Activated CD4-positive, alpha-beta T cell treated with anti-CD3 and anti-CD28 coated beads for 36 hours (primary cell): ENCODE measurements at regions of chr1 and their contacts with region 1.

Region 1: DNA sequence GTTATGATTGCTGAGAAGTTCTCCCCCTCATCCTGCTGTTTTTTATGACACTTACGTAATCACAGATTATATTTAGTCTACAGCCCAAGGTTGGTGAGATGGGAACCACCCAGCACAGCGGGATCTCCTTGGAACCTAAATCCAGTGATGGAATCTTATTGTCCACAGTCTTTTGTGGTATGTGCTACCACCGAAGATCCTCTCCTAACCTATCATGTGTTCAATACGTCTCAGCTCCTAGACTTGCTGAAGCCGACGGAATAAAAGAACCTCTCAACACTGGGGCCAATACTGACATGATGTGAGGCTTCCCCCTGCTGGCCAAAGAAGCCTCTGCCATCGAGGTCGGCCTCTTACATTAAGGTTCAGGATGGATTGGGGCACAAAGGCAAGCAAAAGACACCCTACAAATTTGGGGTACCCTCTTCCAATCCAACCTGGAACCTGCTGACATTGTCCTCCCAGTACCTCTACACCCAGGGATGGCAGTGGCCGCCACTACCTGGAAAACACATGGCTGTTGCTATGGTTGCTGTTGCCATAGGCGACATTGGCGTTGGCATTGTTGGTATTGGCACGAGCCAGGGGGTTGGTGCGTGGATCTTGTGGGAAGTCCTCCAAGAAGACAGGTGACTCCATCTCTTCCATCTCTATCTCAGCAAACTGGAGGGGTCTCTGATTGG is 19.4 kb upstream of the KIF21B start:
- DNase-seq: peak; percentile 85
- ATAC-seq: peak; percentile 96
- H3K4me3 Mint-ChIP-seq: no peak overlapping the region
- H3K27ac Mint-ChIP-seq: no peak overlapping the region
- H3K4me1 Mint-ChIP-seq: no peaks in the 10 kb centered on the region
- H3K27me3 Mint-ChIP-seq: no peaks in the 10 kb centered on the region

Region 2: DNA sequence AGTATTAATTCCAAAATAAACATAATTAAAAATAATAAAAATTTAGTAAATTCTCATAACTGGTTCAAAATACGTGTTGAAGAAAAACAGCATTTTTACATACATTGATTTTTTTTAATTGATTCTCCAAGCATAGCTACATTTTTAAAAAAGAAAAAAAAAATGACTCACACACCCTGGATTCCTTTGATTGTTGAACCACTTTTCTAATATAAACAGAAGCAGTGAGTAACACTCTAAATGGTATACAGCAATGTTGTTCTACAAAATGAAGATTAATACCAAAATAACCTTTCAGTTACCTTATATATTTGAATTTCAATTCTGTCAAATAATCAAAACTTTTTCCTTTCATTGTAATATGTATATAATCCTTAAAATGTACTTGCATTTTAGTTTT is 1262.0 kb before region 1 on chr1:
- CTCF ChIA-PET with region 1: no interaction called
- POLR2A ChIA-PET with region 1: no interaction called
- intact Hi-C with region 1: no loop called
- DNase-seq: no peak
- ATAC-seq: no peak
- H3K4me3 Mint-ChIP-seq: no peak overlapping the region
- H3K27ac Mint-ChIP-seq: no peak overlapping the region
- H3K4me1 Mint-ChIP-seq: no peaks in the 10 kb centered on the region
- H3K27me3 Mint-ChIP-seq: peaks cover 8% of the 10 kb centered on the region

Region 3: DNA sequence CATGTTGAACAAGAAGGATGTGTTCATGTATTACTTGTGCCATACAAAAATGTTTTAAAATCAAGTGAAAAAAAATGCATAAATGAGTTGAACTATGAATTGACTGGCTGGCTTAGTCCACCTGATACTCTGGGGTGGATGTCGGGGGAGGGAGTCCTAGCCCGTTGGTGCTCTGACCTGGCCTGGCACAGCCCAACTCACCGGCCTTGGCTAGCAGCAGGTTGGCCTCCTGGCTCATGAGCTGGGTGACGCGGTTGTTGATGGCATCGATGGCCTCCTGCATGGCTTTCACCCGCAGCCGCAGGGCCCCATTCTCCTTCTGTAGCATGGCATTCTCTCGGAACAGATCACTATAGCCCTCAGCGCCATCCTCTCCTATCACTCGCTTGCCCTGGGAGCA is 41.0 kb before region 1 on chr1:
- CTCF ChIA-PET with region 1: interaction called, 4 read pairs
- POLR2A ChIA-PET with region 1: no interaction called
- intact Hi-C with region 1: loop called in 1 of 2 experiments (anchors 2 kb)
- DNase-seq: no peak
- ATAC-seq: no peak
- H3K4me3 Mint-ChIP-seq: no peak overlapping the region
- H3K27ac Mint-ChIP-seq: peak overlapping the region; percentile 56
- H3K4me1 Mint-ChIP-seq: peaks cover 23% of the 10 kb centered on the region
- H3K27me3 Mint-ChIP-seq: no peaks in the 10 kb centered on the region

Region 4: DNA sequence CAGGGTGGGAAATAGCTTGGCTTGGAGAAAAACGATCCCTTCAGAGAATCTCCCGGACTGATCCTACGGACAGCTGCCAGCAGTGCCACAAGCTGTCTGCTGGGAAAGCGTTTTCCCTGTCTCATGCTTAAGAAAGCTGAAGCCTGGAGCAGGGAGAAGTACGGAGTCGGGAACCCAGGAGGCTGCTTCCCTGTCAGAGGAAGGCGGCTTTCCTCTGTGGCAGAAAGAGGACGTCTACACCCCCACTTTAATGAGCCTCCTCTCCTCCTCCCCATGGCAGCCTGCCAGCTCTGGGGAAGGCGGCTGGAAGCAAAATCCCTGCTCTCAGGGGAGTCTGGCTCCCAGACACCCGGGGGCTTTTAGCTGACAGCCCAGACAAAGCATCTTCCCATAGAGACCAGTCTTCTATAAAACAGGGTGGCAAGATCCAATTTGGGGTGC is 26.7 kb before region 1 on chr1:
- CTCF ChIA-PET with region 1: interaction called, 12 read pairs
- POLR2A ChIA-PET with region 1: no interaction called
- intact Hi-C with region 1: no loop called
- DNase-seq: no peak
- ATAC-seq: no peak
- H3K4me3 Mint-ChIP-seq: peak overlapping the region; percentile 51
- H3K27ac Mint-ChIP-seq: peak overlapping the region; percentile 99
- H3K4me1 Mint-ChIP-seq: peaks cover 94% of the 10 kb centered on the region
- H3K27me3 Mint-ChIP-seq: no peaks in the 10 kb centered on the region

Region 5: DNA sequence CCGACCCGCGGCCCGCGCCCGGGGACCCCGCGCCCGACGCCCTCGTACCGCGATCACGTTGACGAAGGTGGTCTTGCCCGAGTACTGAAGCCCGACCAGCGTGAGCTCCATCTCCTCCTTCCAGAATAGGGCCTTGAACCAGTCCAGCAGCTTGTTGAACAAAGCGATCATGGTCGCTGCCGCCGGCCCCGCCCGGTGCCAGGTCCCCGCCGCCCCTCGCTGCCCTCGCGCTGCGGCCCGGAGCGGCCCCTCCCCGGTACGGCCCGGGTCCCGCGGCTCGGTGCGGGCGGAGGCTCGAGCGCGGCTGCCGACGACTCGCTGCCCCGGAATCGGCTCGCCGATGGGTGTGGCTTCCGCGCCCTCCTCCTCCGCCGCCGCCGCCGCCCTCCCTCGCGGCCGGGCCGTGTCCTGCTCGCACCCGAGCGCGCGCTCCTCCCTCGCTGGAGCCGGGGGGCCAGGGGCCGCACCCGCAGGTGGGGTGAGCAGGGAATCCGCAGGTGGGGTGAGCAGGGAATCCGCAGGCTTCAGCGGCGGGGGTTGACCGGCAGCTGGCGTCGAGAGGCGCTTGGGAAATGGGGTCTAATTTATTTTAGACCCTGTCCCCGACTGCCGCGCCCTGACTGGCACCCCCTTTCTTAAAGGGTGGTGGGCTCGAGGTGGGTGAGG is 1101.6 kb after region 1 on chr1 and contains the start of gene ARL8A:
- CTCF ChIA-PET with region 1: no interaction called
- POLR2A ChIA-PET with region 1: no interaction called
- intact Hi-C with region 1: no loop called
- DNase-seq: peak; percentile 83
- ATAC-seq: peak; percentile 68
- H3K4me3 Mint-ChIP-seq: peak within 1 kb of the TSS; percentile 95
- H3K27ac Mint-ChIP-seq: peak within 1 kb of the TSS; percentile 92
- H3K4me1 Mint-ChIP-seq: peaks cover 31% of the 10 kb centered on the region
- H3K27me3 Mint-ChIP-seq: no peaks in the 10 kb centered on the region
- total RNA-seq, gene ARL8A: 32.3 to 51.7 TPM